Heart right ventricle (tissue), 16 donors: ENCODE measurements at regions of chr11 and their contacts with region 1.

Region 1: GRCh38 chr11:33362051-33362910 is 105.1 kb downstream of the HIPK3 start:
- DNase-seq: peak in 1 of 2 donors; percentile 24
- ATAC-seq: peak; percentile 9 to 76 (median 51)
- H3K4me3 ChIP-seq: no peak overlapping the region
- H3K27ac ChIP-seq: no peak overlapping the region
- H3K4me1 ChIP-seq: peaks cover 0 to 12% (median 2%) of the 10 kb centered on the region in 9 donors
- H3K27me3 ChIP-seq: no peaks in the 10 kb centered on the region
- CTCF ChIP-seq: peak; percentile 66 to 80 (median 76)

Region 2: DNA sequence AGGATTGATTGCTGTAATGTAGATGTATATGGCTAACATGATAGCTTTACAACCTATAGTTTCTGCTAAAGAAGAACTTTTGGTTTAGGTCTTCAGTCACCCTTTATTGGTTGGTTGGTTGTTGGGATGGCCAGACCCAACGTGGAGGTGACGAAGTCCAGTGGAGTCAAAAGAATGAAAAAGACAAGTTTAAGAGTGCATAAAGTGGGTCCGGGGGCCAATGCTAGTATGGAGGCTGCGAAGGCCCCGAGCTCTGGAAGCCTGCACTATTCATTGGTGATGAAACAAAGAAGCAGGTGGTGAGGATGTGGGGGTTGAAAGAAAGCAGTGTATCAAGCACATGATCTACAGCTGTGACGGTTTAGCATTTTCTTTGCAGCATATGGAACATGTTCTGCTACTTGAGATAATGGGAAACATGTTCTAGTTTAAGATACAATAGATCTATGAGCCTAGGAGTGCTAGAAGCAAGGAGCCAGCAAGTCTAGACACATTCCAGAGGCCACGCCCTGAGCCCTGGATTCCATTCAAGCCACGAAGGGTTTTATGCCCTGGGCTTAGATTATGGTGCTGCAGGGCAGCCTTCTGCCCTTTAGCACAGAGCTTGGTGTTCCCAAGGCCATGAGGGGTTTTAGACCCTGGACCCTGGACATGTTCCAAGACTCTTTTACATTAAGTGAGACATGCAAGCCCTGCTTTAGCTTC is 316.6 kb before region 1 on chr11:
- intact Hi-C with region 1: no loop called
- DNase-seq: no peak
- ATAC-seq: no peak
- H3K4me3 ChIP-seq: no peak overlapping the region
- H3K27ac ChIP-seq: no peak overlapping the region
- H3K4me1 ChIP-seq: peaks cover 0 to 23% (median 6%) of the 10 kb centered on the region in 9 donors
- H3K27me3 ChIP-seq: no peaks in the 10 kb centered on the region
- CTCF ChIP-seq: no peak

Region 3: DNA sequence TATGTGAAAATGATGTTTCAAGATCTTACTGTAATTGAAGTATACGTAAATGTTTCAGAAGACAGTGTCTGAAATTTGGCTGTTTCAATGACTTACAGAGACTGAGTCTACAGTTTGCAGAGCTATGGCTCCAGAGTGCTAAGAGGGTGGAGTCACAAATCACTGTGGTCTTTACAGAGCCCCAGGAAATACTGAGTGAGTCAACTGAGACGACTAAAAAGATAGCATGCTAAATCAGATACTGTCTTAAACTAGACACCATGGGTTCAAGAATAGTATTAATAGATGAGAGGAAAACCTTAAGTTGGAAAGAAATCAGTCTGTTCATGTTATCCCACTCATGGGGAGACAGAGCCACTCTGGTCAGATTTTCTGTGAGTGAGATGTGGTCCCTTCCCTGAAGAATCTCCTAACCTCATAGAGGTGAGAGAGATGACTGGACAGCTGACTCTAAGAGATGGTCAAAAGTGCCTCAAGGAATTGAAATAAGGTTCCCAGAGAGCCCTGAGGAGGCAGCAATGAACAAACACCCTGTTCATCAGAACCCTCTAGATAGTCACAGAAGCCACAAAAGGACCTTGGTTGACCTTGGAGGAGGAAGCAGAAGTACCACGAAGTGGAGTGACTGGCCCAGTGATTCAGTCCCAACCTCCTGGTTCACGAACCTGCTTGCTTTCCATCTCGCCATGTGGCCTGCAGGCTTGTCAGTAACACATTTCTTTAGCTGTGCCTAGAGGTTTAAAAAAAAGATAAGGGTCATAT is 308.1 kb after region 1 on chr11:
- intact Hi-C with region 1: loop called in 1 of 10 experiments (anchors 5 kb)
- DNase-seq: no peak
- ATAC-seq: no peak
- H3K4me3 ChIP-seq: no peak overlapping the region
- H3K27ac ChIP-seq: no peak overlapping the region
- H3K4me1 ChIP-seq: no peaks in the 10 kb centered on the region
- H3K27me3 ChIP-seq: peaks cover 0 to 4% (median 0%) of the 10 kb centered on the region in 7 donors
- CTCF ChIP-seq: no peak

Region 4: GRCh38 chr11:33687733-33688479 is 325.6 kb after region 1 on chr11:
- intact Hi-C with region 1: loop called (anchors 1 to 5 kb)
- DNase-seq: peak in 1 of 2 donors; percentile 70
- ATAC-seq: no peak
- H3K4me3 ChIP-seq: no peak overlapping the region
- H3K27ac ChIP-seq: peak overlapping the region in 2 of 10 donors; percentile 84 to 94
- H3K4me1 ChIP-seq: peaks cover 16 to 52% (median 38%) of the 10 kb centered on the region in 9 donors
- H3K27me3 ChIP-seq: no peaks in the 10 kb centered on the region
- CTCF ChIP-seq: peak; percentile 66 to 85 (median 76)

Region 5: GRCh38 chr11:33742249-33742851 is 380.1 kb after region 1 on chr11:
- intact Hi-C with region 1: loop called in 9 of 10 experiments (anchors 2 to 10 kb)
- DNase-seq: no peak
- ATAC-seq: peak in 7 of 8 donors; percentile 13 to 60 (median 46)
- H3K4me3 ChIP-seq: no peak overlapping the region
- H3K27ac ChIP-seq: peak overlapping the region in 4 of 10 donors; percentile 4 to 29 (median 26)
- H3K4me1 ChIP-seq: peaks cover 0 to 43% (median 11%) of the 10 kb centered on the region in 9 donors
- H3K27me3 ChIP-seq: no peaks in the 10 kb centered on the region
- CTCF ChIP-seq: peak; percentile 34 to 77 (median 67)

Region 6: GRCh38 chr11:33819278-33819677 is 457.0 kb after region 1 on chr11:
- intact Hi-C with region 1: loop called in 2 of 10 experiments (anchors 10 kb)
- DNase-seq: no peak
- ATAC-seq: no peak
- H3K4me3 ChIP-seq: no peak overlapping the region
- H3K27ac ChIP-seq: no peak overlapping the region
- H3K4me1 ChIP-seq: no peaks in the 10 kb centered on the region
- H3K27me3 ChIP-seq: peaks cover 4 to 44% (median 30%) of the 10 kb centered on the region in 7 donors
- CTCF ChIP-seq: no peak